Activated CD4-positive, alpha-beta T cell treated with anti-CD3 and anti-CD28 coated beads for 36 hours (primary cell): ENCODE measurements at regions of chr16 and their contacts with region 1.

Region 1: DNA sequence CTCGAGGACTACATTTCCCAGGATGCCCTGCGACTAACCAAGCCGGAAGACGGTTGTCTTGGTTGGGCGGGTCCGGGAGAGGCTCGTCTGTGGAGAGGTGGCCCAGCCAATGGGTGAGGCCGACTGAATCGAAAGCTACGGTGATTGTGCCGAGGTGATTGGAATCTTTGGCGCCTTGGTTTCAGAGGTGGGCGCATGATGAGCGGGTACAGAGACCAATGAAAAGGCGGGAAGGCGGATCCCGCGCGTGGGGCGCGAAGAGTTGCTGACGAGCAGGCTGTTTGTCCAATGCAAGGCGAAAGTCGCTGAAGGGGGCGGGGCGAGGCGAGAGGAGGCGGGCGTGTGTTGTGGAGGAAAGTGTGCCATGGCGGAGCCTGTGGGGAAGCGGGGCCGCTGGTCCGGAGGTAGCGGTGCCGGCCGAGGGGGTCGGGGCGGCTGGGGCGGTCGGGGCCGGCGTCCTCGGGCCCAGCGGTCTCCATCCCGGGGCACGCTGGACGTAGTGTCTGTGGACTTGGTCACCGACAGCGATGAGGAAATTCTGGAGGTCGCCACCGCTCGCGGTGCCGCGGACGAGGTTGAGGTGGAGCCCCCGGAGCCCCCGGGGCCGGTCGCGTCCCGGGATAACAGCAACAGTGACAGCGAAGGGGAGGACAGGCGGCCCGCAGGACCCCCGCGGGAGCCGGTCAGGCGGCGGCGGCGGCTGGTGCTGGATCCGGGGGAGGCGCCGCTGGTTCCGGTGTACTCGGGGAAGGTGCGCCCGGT is at the start of gene NFATC2IP:
- DNase-seq: peak; percentile 100
- ATAC-seq: peak; percentile 98
- H3K4me3 Mint-ChIP-seq: peak within 1 kb of the TSS; percentile 98
- H3K27ac Mint-ChIP-seq: peak within 1 kb of the TSS; percentile 89
- H3K4me1 Mint-ChIP-seq: peaks cover 24% of the 10 kb centered on the region
- H3K27me3 Mint-ChIP-seq: no peaks in the 10 kb centered on the region
- total RNA-seq, gene NFATC2IP: 69.2 to 72.7 TPM

Region 2: DNA sequence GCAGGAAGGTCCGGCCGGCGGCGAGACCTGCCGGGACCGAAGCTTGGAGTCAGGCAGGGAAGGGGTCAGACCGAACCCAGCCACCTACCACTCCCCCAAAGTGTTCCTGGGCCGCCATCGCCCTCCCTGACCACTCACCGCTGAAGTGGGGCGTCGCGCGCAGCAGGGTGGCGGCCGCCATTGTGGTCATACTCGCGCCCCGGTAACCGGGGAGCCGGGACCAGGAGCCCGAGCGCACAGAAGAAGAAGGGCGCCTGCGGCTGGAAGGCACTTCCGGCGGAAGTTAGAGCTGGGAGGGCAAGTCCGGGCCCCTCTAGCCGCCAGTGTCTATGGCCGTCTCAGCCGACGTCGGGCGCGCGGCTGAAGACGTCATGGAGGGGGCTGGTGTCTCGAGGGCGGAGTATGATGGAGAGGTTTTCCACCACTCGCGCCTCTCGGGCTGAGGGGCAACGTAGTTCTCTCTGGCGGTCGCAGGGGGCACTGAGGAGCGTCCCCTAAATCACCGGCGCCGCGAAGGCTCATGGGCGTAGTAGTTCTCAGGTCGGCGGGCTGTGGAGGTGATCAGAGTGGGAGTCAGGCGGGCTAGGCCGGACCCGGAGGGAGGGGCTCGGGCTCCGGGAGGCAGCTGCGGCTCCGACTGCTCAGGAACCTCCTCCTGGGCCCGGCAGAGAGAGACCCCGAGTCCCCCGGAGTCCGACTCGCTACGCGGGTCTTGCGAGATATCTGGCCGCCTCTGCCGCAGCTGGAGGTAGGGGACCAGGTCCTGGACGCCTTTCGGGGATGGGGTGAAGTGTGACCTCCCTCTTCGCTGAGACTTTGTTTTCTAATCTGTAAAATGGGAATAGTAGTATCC is 104.5 kb before region 1 on chr16 and contains the start of gene TUFM:
- CTCF ChIA-PET with region 1: interaction called, 5 read pairs
- POLR2A ChIA-PET with region 1: interaction called, 3 read pairs
- intact Hi-C with region 1: loop called (anchors 1 kb)
- DNase-seq: peak; percentile 99
- ATAC-seq: peak; percentile 94
- H3K4me3 Mint-ChIP-seq: peak within 1 kb of the TSS; percentile 97
- H3K27ac Mint-ChIP-seq: peak within 1 kb of the TSS; percentile 97
- H3K4me1 Mint-ChIP-seq: peaks cover 23% of the 10 kb centered on the region
- H3K27me3 Mint-ChIP-seq: no peaks in the 10 kb centered on the region
- total RNA-seq, gene TUFM: 224 to 241 TPM

Region 3: GRCh38 chr16:28873536-28874201 is 77.2 kb before region 1 on chr16:
- CTCF ChIA-PET with region 1: interaction called, 23 read pairs
- POLR2A ChIA-PET with region 1: no interaction called
- intact Hi-C with region 1: no loop called
- DNase-seq: peak; percentile 75
- ATAC-seq: peak; percentile 88
- H3K4me3 Mint-ChIP-seq: no peak overlapping the region
- H3K27ac Mint-ChIP-seq: no peak overlapping the region
- H3K4me1 Mint-ChIP-seq: peaks cover under 1% of the 10 kb centered on the region
- H3K27me3 Mint-ChIP-seq: no peaks in the 10 kb centered on the region

Region 4: DNA sequence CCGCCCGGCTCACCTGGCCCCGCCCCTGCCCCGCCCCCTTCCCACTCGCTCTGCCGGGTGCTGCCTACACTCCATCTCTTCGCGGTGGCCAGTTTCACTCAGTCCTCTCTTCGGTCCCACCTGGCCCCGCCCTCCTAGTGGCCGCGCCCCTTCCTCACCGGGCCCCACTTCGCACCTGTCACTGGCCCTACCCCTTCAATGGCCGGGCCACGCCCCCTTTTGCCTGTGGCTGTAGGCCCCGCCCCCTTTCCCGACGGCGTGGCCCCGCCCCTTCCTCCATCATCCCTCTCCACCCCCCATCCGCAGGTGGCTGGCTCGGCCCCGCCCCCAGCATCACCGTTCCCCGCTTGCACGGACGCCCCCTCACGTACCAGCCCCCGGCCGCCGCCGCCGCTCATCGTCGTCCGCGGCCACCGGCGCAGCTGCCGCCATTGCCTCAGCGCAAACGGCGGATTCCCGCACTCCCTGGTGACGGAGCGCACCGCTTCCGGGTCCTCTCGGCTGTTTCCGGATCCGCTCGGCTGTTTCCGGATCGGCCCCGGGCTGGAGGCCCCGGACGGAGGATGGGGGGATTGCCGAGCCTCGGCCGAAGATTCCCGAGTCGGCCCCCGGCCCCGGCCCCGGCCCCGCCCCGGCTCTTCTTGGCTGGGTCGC is 26.0 kb before region 1 on chr16 and contains the start of gene RABEP2:
- CTCF ChIA-PET with region 1: interaction called, 12 read pairs
- POLR2A ChIA-PET with region 1: no interaction called
- intact Hi-C with region 1: loop called in 1 of 2 experiments (anchors 1 kb)
- DNase-seq: peak; percentile 99
- ATAC-seq: peak; percentile 93
- H3K4me3 Mint-ChIP-seq: peak within 1 kb of the TSS; percentile 87
- H3K27ac Mint-ChIP-seq: peak within 1 kb of the TSS; percentile 96
- H3K4me1 Mint-ChIP-seq: peaks cover 14% of the 10 kb centered on the region
- H3K27me3 Mint-ChIP-seq: no peaks in the 10 kb centered on the region
- total RNA-seq, gene RABEP2: 8.1 to 12.9 TPM

Region 5: DNA sequence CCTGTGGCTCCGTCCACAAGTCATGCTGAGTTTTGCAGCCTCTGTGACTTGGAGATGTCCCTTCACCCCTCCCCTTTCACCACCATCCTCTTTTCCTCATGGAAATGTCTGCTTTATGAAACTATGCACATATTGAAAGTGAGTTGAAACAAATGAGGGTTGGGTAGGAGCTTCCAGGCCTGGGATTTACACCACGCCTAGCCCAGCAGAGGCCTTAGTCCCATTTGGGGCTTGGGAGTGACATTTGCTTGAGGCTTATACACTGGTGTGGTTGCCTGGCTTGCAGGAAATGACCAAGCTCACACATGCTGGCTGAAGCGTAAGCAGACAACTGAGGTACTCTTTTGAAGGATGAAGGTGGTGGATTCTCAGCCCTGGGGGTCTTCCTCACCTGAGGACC is 13.2 kb after region 1 on chr16:
- CTCF ChIA-PET with region 1: no interaction called
- POLR2A ChIA-PET with region 1: interaction called, 6 read pairs
- intact Hi-C with region 1: loop called in 1 of 2 experiments (anchors 1 kb)
- DNase-seq: no peak
- ATAC-seq: no peak
- H3K4me3 Mint-ChIP-seq: no peak overlapping the region
- H3K27ac Mint-ChIP-seq: no peak overlapping the region
- H3K4me1 Mint-ChIP-seq: no peaks in the 10 kb centered on the region
- H3K27me3 Mint-ChIP-seq: no peaks in the 10 kb centered on the region